HEK293T (cell line): ENCODE measurements at regions of chr17 and their contacts with region 1.

Region 1: DNA sequence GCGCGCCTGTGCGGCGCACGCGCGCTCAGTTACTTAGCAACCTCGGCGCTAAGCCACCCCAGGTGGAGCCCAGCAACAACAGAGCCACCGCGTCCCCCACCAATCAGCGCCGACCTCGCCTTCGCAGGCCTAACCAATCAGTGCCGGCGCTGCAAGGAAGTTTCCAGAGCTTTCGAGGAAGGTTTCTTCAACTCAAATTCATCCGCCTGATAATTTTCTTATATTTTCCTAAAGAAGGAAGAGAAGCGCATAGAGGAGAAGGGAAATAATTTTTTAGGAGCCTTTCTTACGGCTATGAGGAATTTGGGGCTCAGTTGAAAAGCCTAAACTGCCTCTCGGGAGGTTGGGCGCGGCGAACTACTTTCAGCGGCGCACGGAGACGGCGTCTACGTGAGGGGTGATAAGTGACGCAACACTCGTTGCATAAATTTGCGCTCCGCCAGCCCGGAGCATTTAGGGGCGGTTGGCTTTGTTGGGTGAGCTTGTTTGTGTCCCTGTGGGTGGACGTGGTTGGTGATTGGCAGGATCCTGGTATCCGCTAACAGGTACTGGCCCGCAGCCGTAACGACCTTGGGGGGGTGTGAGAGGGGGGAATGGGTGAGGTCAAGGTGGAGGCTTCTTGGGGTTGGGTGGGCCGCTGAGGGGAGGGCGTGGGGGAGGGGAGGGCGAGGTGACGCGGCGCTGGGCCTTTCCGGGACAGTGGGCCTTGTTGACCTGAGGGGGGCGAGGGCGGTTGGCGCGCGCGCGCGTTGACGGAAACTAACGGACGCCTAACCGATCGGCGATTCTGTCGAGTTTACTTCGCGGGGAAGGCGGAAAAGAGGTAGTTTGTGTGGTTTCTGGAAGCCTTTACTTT is at the start of gene UBB:
- DNase-seq: peak; percentile 89

Region 2: GRCh38 chr17:16232391-16232790 is 148.5 kb before region 1 on chr17:
- CTCF ChIA-PET with region 1: no interaction called
- POLR2A ChIA-PET with region 1: no interaction called
- DNase-seq: no peak

Region 3: DNA sequence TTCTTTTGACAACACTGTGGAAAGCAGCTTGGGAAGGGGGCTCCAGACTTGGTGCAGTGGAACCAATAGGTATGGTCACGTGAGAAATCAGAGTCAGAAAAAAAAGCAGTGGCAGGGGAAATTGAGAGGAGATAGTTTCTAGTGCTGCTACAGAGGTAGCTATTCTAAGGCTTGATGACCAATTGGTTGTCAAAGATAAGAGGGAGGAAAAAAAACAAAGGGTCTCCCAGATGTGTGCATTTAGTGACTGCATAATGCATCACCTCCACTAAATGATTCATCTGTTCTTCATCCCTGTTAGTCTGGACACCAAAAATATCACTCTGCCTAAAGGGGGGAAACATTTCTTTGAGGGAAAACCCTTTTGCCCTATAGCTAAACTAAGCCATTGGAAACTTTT is 107.4 kb before region 1 on chr17:
- CTCF ChIA-PET with region 1: no interaction called
- POLR2A ChIA-PET with region 1: no interaction called
- DNase-seq: no peak

Region 4: DNA sequence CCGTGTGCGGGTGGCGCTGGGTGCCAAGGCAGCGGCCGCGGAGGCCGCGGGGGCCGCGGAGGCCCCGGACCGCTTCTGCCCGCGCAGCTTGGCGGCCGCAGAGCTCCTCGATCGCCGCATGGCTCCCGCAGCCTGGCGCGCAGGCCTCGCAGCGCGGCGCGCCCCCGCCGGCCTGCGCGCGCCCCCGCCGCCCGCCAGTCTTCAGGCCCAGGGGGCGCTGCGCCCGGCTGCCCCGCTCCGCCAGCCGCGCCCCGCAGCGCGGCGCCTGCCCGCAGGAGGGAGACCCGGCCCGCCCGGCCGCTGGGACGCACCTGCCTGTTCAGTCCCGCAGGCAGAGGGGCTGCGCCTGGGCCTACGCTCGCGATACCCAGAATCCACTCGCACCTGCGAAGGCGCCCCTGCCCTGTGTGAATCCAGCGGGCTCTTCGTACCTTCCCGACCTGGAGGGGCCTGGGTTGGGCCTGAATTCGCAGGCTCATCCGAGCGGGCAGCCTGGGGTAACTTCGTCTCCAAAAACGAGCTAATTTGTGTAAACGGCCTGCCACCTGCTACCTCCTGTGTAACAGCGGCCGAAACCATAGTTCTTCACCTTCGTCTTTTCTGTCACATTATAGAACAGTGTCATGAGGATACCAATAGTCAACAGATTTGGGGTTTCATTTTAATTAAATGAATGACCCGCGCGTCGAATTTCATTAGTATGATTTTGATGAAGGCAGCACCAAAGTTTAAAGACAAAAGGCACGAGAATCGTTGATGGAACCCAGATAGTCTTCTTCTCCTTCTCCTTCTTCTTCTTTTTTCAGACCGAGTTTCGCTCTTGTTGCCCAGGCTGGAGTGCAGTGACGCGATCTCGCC is 27.3 kb before region 1 on chr17 and contains the start of gene CENPV:
- CTCF ChIA-PET with region 1: interaction called, 5 read pairs
- POLR2A ChIA-PET with region 1: interaction called, 20 read pairs
- DNase-seq: peak; percentile 81

Region 5: GRCh38 chr17:16363749-16364536 is 16.9 kb before region 1 on chr17:
- CTCF ChIA-PET with region 1: interaction called, 11 read pairs
- POLR2A ChIA-PET with region 1: interaction called, 28 read pairs
- DNase-seq: peak; percentile 74

Region 6: GRCh38 chr17:16415031-16415924 is 34.4 kb after region 1 on chr17 and contains the start of gene TRPV2:
- CTCF ChIA-PET with region 1: interaction called, 3 read pairs
- POLR2A ChIA-PET with region 1: interaction called, 22 read pairs
- DNase-seq: peak; percentile 54

Region 7: GRCh38 chr17:16428098-16428882 is 47.4 kb after region 1 on chr17:
- CTCF ChIA-PET with region 1: interaction called, 3 read pairs
- POLR2A ChIA-PET with region 1: interaction called, 12 read pairs
- DNase-seq: peak; percentile 77

Region 8: DNA sequence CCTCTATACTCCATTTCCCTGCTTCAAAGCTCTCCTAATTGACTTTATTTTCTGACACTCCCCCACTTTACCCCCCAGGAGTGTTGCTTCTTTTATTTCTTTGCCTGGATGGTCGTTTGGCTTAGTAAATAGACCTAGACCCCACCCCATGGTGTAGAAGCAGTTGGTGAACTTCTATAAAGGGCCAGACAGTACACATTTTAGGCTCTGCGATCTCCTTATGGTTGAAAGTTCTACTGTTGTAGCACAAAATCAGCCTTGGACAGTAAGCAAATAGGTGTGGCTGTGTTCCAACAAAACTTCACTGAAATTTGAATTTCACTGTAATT is 156.2 kb after region 1 on chr17:
- CTCF ChIA-PET with region 1: no interaction called
- POLR2A ChIA-PET with region 1: interaction called, 11 read pairs
- DNase-seq: no peak